ENCODE measurements at regions of chr6 and their contacts with region 1.

Region 1: DNA sequence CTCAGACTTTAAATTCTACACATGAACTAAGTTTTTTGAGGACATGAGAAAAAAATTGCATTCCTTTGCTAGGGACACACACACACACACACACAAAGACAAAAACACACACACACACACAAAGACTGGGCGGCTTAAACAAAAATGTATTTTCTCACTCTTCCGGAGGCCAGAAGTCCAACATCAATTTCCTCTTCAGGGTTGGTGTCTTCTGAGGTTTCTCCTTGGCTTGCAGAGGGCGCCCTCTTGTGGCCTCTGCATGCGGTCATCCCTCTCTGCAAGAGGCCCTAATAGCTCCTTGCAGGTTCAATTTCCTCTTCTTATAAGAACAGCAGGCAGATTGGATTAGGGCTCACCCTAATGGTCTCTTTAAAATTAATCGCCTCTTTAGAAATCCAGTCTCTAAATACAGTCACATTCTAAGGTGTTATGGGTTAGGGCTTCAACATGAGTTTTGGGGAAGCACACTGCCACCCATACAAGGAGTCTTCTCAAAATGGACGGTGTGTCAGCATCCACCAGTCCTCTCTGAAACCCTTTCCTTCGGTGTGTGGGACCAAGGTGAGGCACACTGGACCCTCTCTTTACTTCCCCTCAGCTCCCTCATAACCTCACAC is 61.4 kb downstream of the GPR6 start:
- DNase-seq: peak; percentile 91
- ATAC-seq: peak; percentile 95

Region 2: GRCh38 chr6:109705258-109705657 is 334.2 kb before region 1 on chr6:
- intact Hi-C with region 1: loop called (anchors 5 kb)
- DNase-seq: peak; percentile 85
- ATAC-seq: peak; percentile 97

Region 3: GRCh38 chr6:109824105-109824504 is 215.4 kb before region 1 on chr6:
- intact Hi-C with region 1: no loop called
- DNase-seq: no peak
- ATAC-seq: no peak

Region 4: GRCh38 chr6:110067837-110068591 is 28.5 kb after region 1 on chr6:
- intact Hi-C with region 1: no loop called
- DNase-seq: no peak
- ATAC-seq: peak; percentile 91

Measured in left ventricle myocardium superior (tissue), 1 donor.